Calu3 (cell line): ENCODE measurements at regions of chr10 and their contacts with region 1.

Region 1: GRCh38 chr10:110387983-110388687 is 83.4 kb upstream of the SMNDC1 start:
- DNase-seq: no peak
- H3K4me3 Mint-ChIP-seq: no peak overlapping the region
- H3K27ac Mint-ChIP-seq: peak overlapping the region; percentile 36
- H3K4me1 Mint-ChIP-seq: peaks cover 15% of the 10 kb centered on the region
- H3K27me3 Mint-ChIP-seq: no peaks in the 10 kb centered on the region
- CTCF ChIP-seq: no peak

Region 2: DNA sequence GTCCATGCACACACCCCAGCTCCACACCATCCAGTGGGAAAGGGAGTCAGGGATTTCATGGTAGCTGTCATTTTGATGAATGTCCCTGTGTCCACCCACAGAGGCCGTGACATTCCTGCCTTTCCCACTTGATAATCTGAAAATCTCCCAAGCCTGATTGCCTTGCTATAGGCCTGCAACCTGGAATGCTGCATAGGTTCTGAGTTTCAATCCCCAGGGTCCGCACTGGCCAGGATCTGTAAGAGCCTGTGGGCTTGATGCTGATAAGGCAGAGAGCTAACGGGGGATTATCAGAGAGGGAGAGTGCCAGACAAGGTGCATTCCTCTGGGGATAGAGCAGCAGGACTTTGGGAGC is 313.5 kb after region 1 on chr10:
- CTCF ChIA-PET with region 1: interaction called, 11 read pairs
- intact Hi-C with region 1: no loop called
- DNase-seq: no peak
- H3K4me3 Mint-ChIP-seq: no peak overlapping the region
- H3K27ac Mint-ChIP-seq: no peak overlapping the region
- H3K4me1 Mint-ChIP-seq: no peaks in the 10 kb centered on the region
- H3K27me3 Mint-ChIP-seq: peaks cover 16% of the 10 kb centered on the region
- CTCF ChIP-seq: no peak